SK-N-SH (cell line): ENCODE measurements at regions of chr4 and their contacts with region 1.

Region 1: GRCh38 chr4:26028793-26029567 is 115.0 kb downstream of the SMIM20 start:
- DNase-seq: peak; percentile 82
- H3K4me3 ChIP-seq: no peak overlapping the region
- H3K27ac ChIP-seq: no peak overlapping the region
- H3K4me1 ChIP-seq: peaks cover 0 to 6% of the 10 kb centered on the region in 2 experiments; a peak in 1 of 4 replicates
- H3K27me3 ChIP-seq: no peaks in the 10 kb centered on the region
- CTCF ChIP-seq: peak; percentile 39
- EP300 ChIP-seq: no peak
- RAD21 ChIP-seq: peak; percentile 77

Region 2: DNA sequence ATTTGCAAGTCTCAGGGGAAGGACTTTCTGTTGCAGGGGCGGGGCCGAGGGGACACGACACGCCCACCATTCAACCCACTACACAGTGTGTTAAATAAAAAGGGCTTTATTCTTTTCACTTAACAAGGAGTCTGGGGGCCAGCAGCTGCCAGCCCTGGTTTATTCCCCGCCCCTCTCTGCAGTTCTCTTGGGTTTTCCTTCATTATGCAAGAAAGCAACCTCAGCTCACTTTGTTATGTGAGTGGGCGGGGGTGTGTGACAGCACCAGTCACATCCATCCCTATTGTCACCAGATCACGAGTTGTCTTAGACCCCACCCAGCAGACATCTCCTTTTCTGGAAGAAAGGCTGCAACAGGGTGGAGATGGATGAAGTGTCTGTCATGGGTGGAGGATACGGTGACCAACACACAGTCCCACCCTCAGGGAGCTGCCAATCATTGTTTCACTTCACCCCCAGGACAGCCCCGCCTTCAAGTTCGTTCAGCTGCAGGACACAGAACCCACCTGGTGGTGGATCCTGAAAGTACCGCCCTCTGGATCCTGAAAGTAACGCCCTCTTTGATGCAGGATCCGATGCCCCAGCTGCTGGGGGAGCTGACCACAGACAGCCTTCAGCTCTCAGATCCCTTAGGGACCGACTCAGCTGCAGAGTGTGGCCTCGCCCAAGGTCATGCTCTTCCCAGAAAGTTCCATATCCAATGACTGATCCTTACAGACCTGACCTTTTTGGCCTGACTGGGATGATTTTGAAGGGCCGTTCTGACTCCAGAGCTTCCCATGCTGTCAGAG is 35.4 kb before region 1 on chr4:
- CTCF ChIA-PET with region 1: interaction called, 13 read pairs
- POLR2A ChIA-PET with region 1: no interaction called
- DNase-seq: peak; percentile 41
- H3K4me3 ChIP-seq: no peak overlapping the region; a peak in 1 of 4 replicates
- H3K27ac ChIP-seq: no peak overlapping the region
- H3K4me1 ChIP-seq: no peaks in the 10 kb centered on the region; a peak in 1 of 4 replicates
- H3K27me3 ChIP-seq: no peaks in the 10 kb centered on the region
- CTCF ChIP-seq: peak; percentile 25; the same call in 1 of the 2 replicates
- EP300 ChIP-seq: no peak
- RAD21 ChIP-seq: peak; percentile 23; the same call in 1 of the 2 replicates

Region 3: DNA sequence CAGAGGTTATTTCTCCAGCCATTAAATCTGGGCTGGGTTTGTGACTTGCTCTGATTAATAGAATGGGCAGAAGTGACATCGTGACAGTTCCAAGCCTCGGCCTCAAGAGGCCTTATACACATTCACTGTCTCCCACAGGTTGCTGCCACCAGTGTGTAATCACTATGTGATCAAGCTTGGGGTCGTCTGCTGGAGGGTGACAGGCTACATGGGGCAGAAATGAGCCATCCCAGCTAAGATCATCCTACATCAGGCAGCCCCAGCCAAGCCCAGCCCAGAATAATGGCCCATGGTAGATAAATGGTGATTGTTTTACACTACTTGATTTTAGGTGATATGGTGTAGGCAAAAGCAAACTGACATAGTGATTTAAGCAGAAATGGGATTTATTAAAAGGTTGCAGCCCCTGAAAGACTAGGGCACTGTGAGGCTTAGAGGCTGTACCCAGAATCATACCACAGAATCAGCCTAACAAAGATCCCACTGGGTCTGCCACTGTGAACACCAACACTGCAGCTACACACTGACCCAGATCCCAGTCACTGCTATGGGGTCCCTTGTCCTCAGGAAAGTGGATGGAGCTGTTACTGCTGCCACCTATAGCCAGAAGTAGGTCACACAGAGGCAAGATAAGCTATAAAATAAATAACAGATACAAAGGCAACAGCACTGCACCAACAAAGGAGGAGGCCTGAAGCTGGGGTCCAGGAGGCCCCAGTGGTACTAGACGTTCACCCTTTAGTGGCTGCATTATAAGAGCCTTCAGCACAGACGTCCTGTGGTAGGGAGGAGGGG is 132.2 kb after region 1 on chr4:
- CTCF ChIA-PET with region 1: interaction called, 10 read pairs
- POLR2A ChIA-PET with region 1: no interaction called
- DNase-seq: peak; percentile 58
- H3K4me3 ChIP-seq: no peak overlapping the region
- H3K27ac ChIP-seq: no peak overlapping the region
- H3K4me1 ChIP-seq: peaks cover 0 to 2% of the 10 kb centered on the region in 2 experiments; a peak in 1 of 4 replicates
- H3K27me3 ChIP-seq: no peaks in the 10 kb centered on the region
- CTCF ChIP-seq: peak; percentile 25; the same call in 1 of the 2 replicates
- EP300 ChIP-seq: no peak
- RAD21 ChIP-seq: peak; percentile 67